ENCODE measurements at regions of chr16 and their contacts with region 1.

Region 1: DNA sequence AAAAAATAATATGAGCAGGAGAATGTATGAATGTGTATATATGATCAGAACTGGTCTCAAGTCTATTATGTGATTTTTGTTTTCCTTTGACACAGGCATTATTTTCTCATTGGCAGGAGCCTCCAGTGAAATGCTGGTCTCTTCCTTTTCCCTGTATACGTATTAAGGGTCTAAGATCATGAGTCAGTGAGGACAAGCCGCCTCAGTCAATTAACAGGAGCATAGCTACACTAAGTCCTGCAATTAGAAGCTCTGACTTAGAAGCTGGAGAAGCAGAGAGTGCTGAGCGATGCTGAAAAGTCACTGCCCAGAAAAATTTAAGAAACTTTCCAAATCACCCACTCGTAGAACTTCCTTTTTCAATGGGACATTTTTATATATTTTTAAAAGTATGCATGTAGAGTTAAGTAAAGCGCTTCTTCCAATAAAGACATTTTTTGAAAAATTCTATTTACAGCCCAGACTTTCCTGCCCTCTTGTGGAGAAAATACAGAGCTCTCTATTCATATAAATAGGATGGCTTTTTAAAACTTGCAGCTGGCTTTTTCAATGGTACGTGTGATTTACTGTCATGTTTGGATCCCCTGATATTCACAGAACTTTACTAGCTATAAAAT is 70.2 kb upstream of the PSMD7 start:
- H3K4me3 ChIP-seq: no peak overlapping the region
- H3K27ac ChIP-seq: no peak overlapping the region
- H3K4me1 ChIP-seq: no peaks in the 10 kb centered on the region
- CTCF ChIP-seq: no peak

Region 2: DNA sequence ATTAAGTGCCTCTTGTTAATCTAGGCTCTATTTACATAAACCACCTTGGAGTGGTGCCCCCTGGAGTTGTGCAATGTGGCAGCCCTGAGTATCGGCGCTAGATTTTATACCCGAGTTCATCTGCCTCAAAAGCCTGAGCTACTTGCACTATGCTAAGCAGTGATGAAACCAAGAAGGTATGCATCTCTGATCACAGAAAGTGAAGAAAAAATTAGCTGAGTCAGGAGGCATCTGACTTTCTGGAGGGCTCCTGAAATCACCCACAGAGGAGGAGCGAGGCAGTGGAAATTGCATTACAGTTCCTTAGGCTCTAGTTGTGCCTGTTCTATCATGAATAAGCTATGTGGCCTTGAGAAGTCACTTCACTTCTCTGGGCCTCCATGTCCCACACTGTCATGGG is 10.1 kb before region 1 on chr16:
- CTCF ChIA-PET with region 1: interaction called, 10 read pairs
- POLR2A ChIA-PET with region 1: interaction called, 3 read pairs
- H3K4me3 ChIP-seq: no peak overlapping the region
- H3K27ac ChIP-seq: no peak overlapping the region
- H3K4me1 ChIP-seq: no peaks in the 10 kb centered on the region
- CTCF ChIP-seq: no peak

Region 3: DNA sequence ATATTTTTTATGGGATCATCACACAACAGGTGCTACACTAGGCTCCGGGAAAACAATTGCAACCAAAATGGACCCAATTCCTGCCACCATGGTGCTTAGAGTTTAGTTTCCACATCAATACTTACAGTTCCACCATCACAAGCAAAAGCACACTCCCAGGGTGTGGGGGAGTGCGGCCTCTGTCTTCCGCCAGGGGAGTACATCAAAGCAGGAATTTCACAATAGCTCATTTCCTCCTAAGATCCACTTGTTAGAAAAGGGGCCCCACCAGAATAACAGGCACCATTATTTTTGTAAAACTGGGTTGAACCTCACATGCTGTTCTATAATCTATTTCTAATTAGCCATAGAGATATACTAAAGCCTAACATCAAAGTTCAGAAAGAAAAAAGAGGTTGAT is 25.9 kb after region 1 on chr16:
- CTCF ChIA-PET with region 1: no interaction called
- POLR2A ChIA-PET with region 1: no interaction called
- H3K4me3 ChIP-seq: no peak overlapping the region
- H3K27ac ChIP-seq: no peak overlapping the region
- H3K4me1 ChIP-seq: no peaks in the 10 kb centered on the region
- CTCF ChIP-seq: no peak

Measured in HEK293 (cell line).